Activated T-helper 2 cell treated with anti-CD3 and anti-CD28 coated beads, Interferon-gamma antibody, Interleukin-2, Interleukin-4, amounts not matched to agents 10 μg/mL and 5 μg/mL and 100 μg/mL, durations not matched to agents 14 hours and 24 hours and 36 hours (primary cell): ENCODE measurements at regions of chr1 and their contacts with region 1.

Region 1: GRCh38 chr1:201085916-201086735 is 26.1 kb downstream of the CACNA1S start:
- DNase-seq: no peak
- H3K4me3 Mint-ChIP-seq: no peak overlapping the region
- H3K27ac Mint-ChIP-seq: no peak overlapping the region
- H3K4me1 Mint-ChIP-seq: no peaks in the 10 kb centered on the region
- H3K27me3 Mint-ChIP-seq: peaks cover 25% of the 10 kb centered on the region

Region 2: GRCh38 chr1:201019321-201019977 is 66.7 kb before region 1 on chr1:
- intact Hi-C with region 1: no loop called
- DNase-seq: peak; percentile 87
- H3K4me3 Mint-ChIP-seq: peak overlapping the region; percentile 96
- H3K27ac Mint-ChIP-seq: peak overlapping the region; percentile 98
- H3K4me1 Mint-ChIP-seq: peaks cover 72% of the 10 kb centered on the region
- H3K27me3 Mint-ChIP-seq: no peaks in the 10 kb centered on the region

Region 3: GRCh38 chr1:201114236-201115131 is 28.4 kb after region 1 on chr1:
- intact Hi-C with region 1: loop called (anchors 1 kb)
- DNase-seq: peak; percentile 54
- H3K4me3 Mint-ChIP-seq: peak overlapping the region; percentile 80
- H3K27ac Mint-ChIP-seq: no peak overlapping the region
- H3K4me1 Mint-ChIP-seq: peaks cover 2% of the 10 kb centered on the region
- H3K27me3 Mint-ChIP-seq: peaks cover 43% of the 10 kb centered on the region